ENCODE measurements at regions of chr5 and their contacts with region 1.

Region 1: DNA sequence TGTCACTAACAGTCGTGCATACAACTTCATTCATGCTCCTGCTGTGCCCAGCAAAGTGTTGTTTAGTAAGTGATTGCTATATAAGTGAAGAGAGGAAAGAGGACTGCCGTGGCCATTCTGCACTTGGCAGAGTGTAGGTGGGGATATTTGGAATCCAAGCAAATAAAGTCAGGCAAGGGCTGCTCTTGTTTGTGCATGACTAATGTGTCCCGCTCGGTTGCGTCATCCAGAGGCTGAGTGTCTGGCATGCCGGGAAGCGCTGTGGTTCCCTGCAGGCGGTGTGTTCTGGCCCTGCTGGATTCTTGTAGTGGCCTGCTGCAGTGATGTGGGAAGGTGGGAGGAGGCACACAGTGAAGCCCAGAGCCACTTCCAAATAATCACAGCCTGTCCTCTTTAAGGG is 136.9 kb upstream of the ANKH start:
- DNase-seq: peak; percentile 92
- ATAC-seq: peak; percentile 97
- H3K4me3 ChIP-seq: no peak overlapping the region
- H3K27ac ChIP-seq: peak overlapping the region; percentile 0
- H3K4me1 ChIP-seq: peaks cover 20% of the 10 kb centered on the region
- H3K27me3 ChIP-seq: no peaks in the 10 kb centered on the region
- CTCF ChIP-seq: no peak

Region 2: GRCh38 chr5:14270209-14270702 is 738.2 kb before region 1 on chr5:
- intact Hi-C with region 1: no loop called
- DNase-seq: no peak
- ATAC-seq: peak; percentile 91
- H3K4me3 ChIP-seq: no peak overlapping the region
- H3K27ac ChIP-seq: peak overlapping the region; percentile 20
- H3K4me1 ChIP-seq: peaks cover 32% of the 10 kb centered on the region
- H3K27me3 ChIP-seq: no peaks in the 10 kb centered on the region
- CTCF ChIP-seq: peak; percentile 81

Region 3: GRCh38 chr5:14727428-14727865 is 281.0 kb before region 1 on chr5:
- intact Hi-C with region 1: loop called (anchors 5 kb)
- DNase-seq: peak; percentile 87
- ATAC-seq: peak; percentile 86
- H3K4me3 ChIP-seq: no peak overlapping the region
- H3K27ac ChIP-seq: no peak overlapping the region
- H3K4me1 ChIP-seq: no peaks in the 10 kb centered on the region
- H3K27me3 ChIP-seq: no peaks in the 10 kb centered on the region
- CTCF ChIP-seq: peak; percentile 97

Region 4: GRCh38 chr5:14977058-14977685 is 31.3 kb before region 1 on chr5:
- intact Hi-C with region 1: no loop called
- DNase-seq: no peak
- ATAC-seq: no peak
- H3K4me3 ChIP-seq: no peak overlapping the region
- H3K27ac ChIP-seq: no peak overlapping the region
- H3K4me1 ChIP-seq: no peaks in the 10 kb centered on the region
- H3K27me3 ChIP-seq: no peaks in the 10 kb centered on the region
- CTCF ChIP-seq: no peak